ENCODE measurements at regions of chr2 and their contacts with region 1.

Region 1: DNA sequence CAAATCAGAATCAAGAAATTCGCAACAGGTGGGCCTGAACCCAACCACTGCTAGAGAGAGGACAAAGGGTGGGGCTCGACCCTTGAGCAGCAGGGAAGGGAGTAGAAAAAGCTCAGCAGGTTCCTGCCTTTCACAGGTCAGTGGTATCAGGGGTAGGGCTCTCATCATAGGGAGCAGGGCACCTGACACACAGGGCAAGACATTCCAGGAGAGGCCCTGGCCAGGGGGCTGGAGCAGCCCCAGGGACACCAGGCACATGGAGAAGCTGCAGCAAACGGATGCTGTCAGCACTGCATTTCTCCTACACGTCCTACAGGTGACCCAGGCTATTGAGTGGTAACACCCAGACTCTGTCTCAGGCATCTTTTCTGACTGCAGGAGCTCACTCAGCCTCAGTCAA is 17.2 kb upstream of the MLPH start:
- DNase-seq: no peak
- ATAC-seq: no peak
- H3K4me3 ChIP-seq: no peak overlapping the region
- H3K27ac ChIP-seq: no peak overlapping the region
- H3K4me1 ChIP-seq: peaks cover 5% of the 10 kb centered on the region; the same call in 1 of the 2 replicates
- H3K27me3 ChIP-seq: peaks cover 0 to 1% of the 10 kb centered on the region in 2 experiments; a peak in 1 of 4 replicates
- CTCF ChIP-seq: no peak
- EP300 ChIP-seq: no peak
- POLR2A ChIP-seq: no peak
- RAD21 ChIP-seq: no peak

Region 2: GRCh38 chr2:237431372-237431771 is 38.5 kb before region 1 on chr2:
- CTCF ChIA-PET with region 1: interaction called, 3 read pairs
- POLR2A ChIA-PET with region 1: no interaction called
- RAD21 ChIA-PET with region 1: no interaction called
- SMC1A ChIA-PET with region 1: interaction called, 4 read pairs
- in situ Hi-C with region 1: no loop called
- intact Hi-C with region 1: loop called (anchors 1 kb)
- DNase-seq: no peak
- ATAC-seq: no peak
- H3K4me3 ChIP-seq: no peak overlapping the region
- H3K27ac ChIP-seq: no peak overlapping the region
- H3K4me1 ChIP-seq: peaks cover 24% of the 10 kb centered on the region
- H3K27me3 ChIP-seq: no peaks in the 10 kb centered on the region; a peak in 1 of 4 replicates
- CTCF ChIP-seq: no peak
- EP300 ChIP-seq: no peak
- POLR2A ChIP-seq: no peak
- RAD21 ChIP-seq: no peak

Measured in GM12878 (cell line).